ENCODE measurements at regions of chr2 and their contacts with region 1.

Region 1: GRCh38 chr2:197113275-197113711 is 186.8 kb upstream of the PGAP1 start:
- DNase-seq: peak; percentile 68
- ATAC-seq: peak; percentile 71
- H3K4me3 ChIP-seq: no peak overlapping the region
- H3K4me3 Mint-ChIP-seq: no peak overlapping the region
- H3K27ac ChIP-seq: peak overlapping the region in 1 of 2 donors; percentile 44
- H3K27ac Mint-ChIP-seq: peak overlapping the region; percentile 76
- H3K4me1 ChIP-seq: peaks cover 26 to 31% of the 10 kb centered on the region in 2 donors
- H3K4me1 Mint-ChIP-seq: peaks cover 33% of the 10 kb centered on the region
- H3K27me3 ChIP-seq: no peaks in the 10 kb centered on the region
- H3K27me3 Mint-ChIP-seq: no peaks in the 10 kb centered on the region
- CTCF ChIP-seq: peak; percentile 87

Region 2: DNA sequence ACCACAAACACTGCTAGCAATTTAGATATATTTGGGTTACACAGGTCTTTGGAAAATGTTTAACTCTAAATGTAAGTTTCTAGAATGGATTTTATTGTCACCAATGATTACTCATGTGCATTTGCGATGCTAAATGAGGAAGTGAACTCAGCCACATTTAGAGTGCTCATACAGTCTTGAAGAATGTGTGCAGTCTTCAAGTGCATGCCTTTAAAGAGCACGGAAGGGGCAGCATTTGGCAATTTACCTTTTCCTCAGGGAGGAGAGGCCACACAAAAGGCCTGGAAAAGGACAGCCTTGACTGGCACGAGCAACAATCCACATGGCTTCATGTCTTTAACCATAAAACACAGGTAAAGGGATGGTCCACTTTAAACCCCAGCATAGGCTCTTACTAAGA is 863.4 kb before region 1 on chr2:
- CTCF ChIA-PET with region 1: no interaction called
- POLR2A ChIA-PET with region 1: interaction called, 11 read pairs
- intact Hi-C with region 1: no loop called
- DNase-seq: peak; percentile 68
- ATAC-seq: peak; percentile 89
- H3K4me3 ChIP-seq: peak overlapping the region in 1 of 5 experiments; percentile 26
- H3K4me3 Mint-ChIP-seq: peak overlapping the region; percentile 21
- H3K27ac ChIP-seq: peak overlapping the region; percentile 43 to 78
- H3K27ac Mint-ChIP-seq: peak overlapping the region; percentile 88
- H3K4me1 ChIP-seq: peaks cover 57 to 62% of the 10 kb centered on the region in 2 donors
- H3K4me1 Mint-ChIP-seq: peaks cover 73% of the 10 kb centered on the region
- H3K27me3 ChIP-seq: no peaks in the 10 kb centered on the region
- H3K27me3 Mint-ChIP-seq: no peaks in the 10 kb centered on the region
- CTCF ChIP-seq: no peak

Region 3: GRCh38 chr2:197130318-197130717 is 17.0 kb after region 1 on chr2:
- CTCF ChIA-PET with region 1: interaction called, 130 read pairs
- POLR2A ChIA-PET with region 1: no interaction called
- intact Hi-C with region 1: loop called (anchors 1 kb)
- DNase-seq: peak; percentile 75
- ATAC-seq: peak; percentile 70
- H3K4me3 ChIP-seq: peak overlapping the region in 3 of 5 experiments; percentile 14 to 52 (median 21)
- H3K4me3 Mint-ChIP-seq: peak overlapping the region; percentile 84
- H3K27ac ChIP-seq: peak overlapping the region; percentile 81 to 82
- H3K27ac Mint-ChIP-seq: peak overlapping the region; percentile 96
- H3K4me1 ChIP-seq: peaks cover 66 to 69% of the 10 kb centered on the region in 2 donors
- H3K4me1 Mint-ChIP-seq: peaks cover 69% of the 10 kb centered on the region
- H3K27me3 ChIP-seq: no peaks in the 10 kb centered on the region
- H3K27me3 Mint-ChIP-seq: no peaks in the 10 kb centered on the region
- CTCF ChIP-seq: no peak

Region 4: DNA sequence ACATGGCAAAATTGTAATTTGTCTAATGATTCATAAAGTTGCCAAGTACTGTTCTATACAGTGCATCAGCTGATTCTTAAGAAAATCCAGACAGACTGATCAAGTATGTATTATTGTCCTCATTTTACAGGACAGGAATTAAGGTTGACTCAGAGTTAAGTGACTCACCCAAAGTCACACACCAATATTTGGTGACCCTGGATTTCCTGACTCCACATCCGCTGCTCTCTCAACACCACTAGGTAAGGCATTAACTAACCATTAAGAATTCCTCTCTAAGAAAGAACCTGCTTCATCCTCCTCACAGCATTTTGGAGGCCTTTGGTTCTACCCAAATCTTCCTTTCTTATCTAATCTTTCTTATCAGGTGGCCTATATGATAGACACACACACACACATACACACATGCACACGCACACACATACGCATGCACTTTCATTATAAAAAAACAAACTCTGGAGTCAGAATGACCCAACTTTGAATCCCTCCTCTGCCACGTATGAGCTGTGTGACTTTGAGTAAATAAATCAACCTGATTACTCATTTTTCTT is 46.4 kb after region 1 on chr2:
- CTCF ChIA-PET with region 1: interaction called, 328 read pairs
- POLR2A ChIA-PET with region 1: interaction called, 5 read pairs
- intact Hi-C with region 1: loop called (anchors 2 kb)
- DNase-seq: no peak
- ATAC-seq: peak; percentile 42
- H3K4me3 ChIP-seq: no peak overlapping the region
- H3K4me3 Mint-ChIP-seq: peak overlapping the region; percentile 68
- H3K27ac ChIP-seq: peak overlapping the region; percentile 60 to 93
- H3K27ac Mint-ChIP-seq: peak overlapping the region; percentile 90
- H3K4me1 ChIP-seq: peaks cover 79 to 81% of the 10 kb centered on the region in 2 donors
- H3K4me1 Mint-ChIP-seq: peaks cover 81% of the 10 kb centered on the region
- H3K27me3 ChIP-seq: no peaks in the 10 kb centered on the region
- H3K27me3 Mint-ChIP-seq: no peaks in the 10 kb centered on the region
- CTCF ChIP-seq: no peak

Region 5: DNA sequence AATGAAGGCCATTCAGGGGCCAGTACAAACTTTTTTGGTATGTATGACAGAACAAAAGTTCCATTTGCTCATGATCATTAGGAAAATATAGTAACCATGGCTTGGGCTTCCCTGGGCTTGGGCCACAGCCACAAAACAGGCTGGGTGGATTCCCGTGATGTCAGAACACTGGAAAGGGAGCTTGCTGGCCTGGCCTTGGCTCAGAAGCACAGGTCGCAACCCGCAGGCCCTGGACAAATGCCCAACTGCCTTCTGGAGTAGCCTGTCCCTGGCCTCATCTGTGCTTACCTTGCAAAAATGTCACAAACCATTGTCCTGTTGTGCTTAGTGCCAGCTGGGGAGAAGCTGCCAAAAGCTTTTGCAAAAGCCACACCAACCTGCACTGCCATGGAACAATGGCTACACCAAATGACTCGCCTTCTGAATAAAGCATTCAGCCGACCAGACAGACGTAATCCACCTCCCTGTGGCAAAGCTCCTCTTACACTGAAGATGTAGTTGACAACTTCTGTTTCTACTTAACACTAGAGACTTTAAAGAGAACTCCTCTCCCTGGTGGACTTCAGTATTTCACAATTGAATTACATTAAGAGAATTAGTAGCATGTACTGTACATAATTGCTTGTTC is 71.8 kb after region 1 on chr2:
- CTCF ChIA-PET with region 1: interaction called, 86 read pairs
- POLR2A ChIA-PET with region 1: no interaction called
- intact Hi-C with region 1: no loop called
- DNase-seq: no peak
- ATAC-seq: no peak
- H3K4me3 ChIP-seq: no peak overlapping the region
- H3K4me3 Mint-ChIP-seq: no peak overlapping the region
- H3K27ac ChIP-seq: peak overlapping the region in 1 of 2 donors; percentile 10
- H3K27ac Mint-ChIP-seq: peak overlapping the region; percentile 17
- H3K4me1 ChIP-seq: peaks cover 23 to 35% of the 10 kb centered on the region in 2 donors
- H3K4me1 Mint-ChIP-seq: peaks cover 75% of the 10 kb centered on the region
- H3K27me3 ChIP-seq: no peaks in the 10 kb centered on the region
- H3K27me3 Mint-ChIP-seq: no peaks in the 10 kb centered on the region
- CTCF ChIP-seq: no peak

Region 6: GRCh38 chr2:197209742-197210408 is 96.6 kb after region 1 on chr2:
- CTCF ChIA-PET with region 1: interaction called, 15 read pairs
- POLR2A ChIA-PET with region 1: no interaction called
- intact Hi-C with region 1: no loop called
- DNase-seq: peak; percentile 74
- ATAC-seq: peak; percentile 37
- H3K4me3 ChIP-seq: peak overlapping the region in 3 of 5 experiments; percentile 10 to 27 (median 21)
- H3K4me3 Mint-ChIP-seq: peak overlapping the region; percentile 84
- H3K27ac ChIP-seq: peak overlapping the region; percentile 94 to 95
- H3K27ac Mint-ChIP-seq: peak overlapping the region; percentile 99
- H3K4me1 ChIP-seq: peaks cover 92 to 99% of the 10 kb centered on the region in 2 donors
- H3K4me1 Mint-ChIP-seq: peaks cover 96% of the 10 kb centered on the region
- H3K27me3 ChIP-seq: no peaks in the 10 kb centered on the region
- H3K27me3 Mint-ChIP-seq: no peaks in the 10 kb centered on the region
- CTCF ChIP-seq: no peak

Region 7: GRCh38 chr2:197356136-197356535 is 242.8 kb after region 1 on chr2:
- CTCF ChIA-PET with region 1: interaction called, 14 read pairs
- POLR2A ChIA-PET with region 1: no interaction called
- intact Hi-C with region 1: no loop called
- DNase-seq: peak; percentile 31
- ATAC-seq: peak; percentile 33
- H3K4me3 ChIP-seq: no peak overlapping the region
- H3K4me3 Mint-ChIP-seq: no peak overlapping the region
- H3K27ac ChIP-seq: no peak overlapping the region
- H3K27ac Mint-ChIP-seq: no peak overlapping the region
- H3K4me1 ChIP-seq: no peaks in the 10 kb centered on the region
- H3K4me1 Mint-ChIP-seq: no peaks in the 10 kb centered on the region
- H3K27me3 ChIP-seq: no peaks in the 10 kb centered on the region
- H3K27me3 Mint-ChIP-seq: no peaks in the 10 kb centered on the region
- CTCF ChIP-seq: peak; percentile 46